CD4-positive, alpha-beta memory T cell (primary cell): ENCODE measurements at regions of chr13 and their contacts with region 1.

Region 1: DNA sequence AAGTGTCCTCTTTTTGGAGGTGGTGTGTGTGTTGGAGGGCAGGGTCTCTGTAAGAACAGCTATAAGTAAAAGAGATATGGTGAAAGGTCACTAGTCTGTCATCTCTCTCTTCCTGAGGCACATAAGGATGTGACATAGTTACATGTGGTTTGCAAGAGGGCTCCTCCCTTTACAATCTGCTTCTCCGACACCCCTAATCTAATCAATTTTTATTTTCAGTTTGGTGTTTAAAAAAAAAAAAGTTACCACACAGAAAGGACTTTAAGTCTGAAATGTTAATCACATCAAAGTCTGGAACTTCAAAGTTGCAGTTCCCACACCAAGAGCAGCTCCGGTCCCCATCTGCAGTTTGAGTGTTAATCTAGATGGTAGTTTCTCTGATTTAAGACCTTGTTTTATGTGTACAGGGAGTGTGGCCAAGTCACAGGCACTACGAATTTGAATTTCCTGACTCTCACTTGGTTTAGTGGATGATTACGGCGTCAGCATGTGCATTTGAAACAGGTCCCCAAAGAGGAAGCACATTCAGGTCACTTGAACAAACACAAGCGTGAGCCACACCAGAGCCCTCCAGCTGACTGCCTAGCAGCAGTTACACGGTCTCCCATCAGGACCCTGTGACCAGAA is 53.1 kb downstream of the FOXO1 start:
- DNase-seq: peak; percentile 78 to 85 (median 84)
- H3K4me3 ChIP-seq: peak overlapping the region in 1 of 2 donors; percentile 43
- H3K4me3 Mint-ChIP-seq: peak overlapping the region; percentile 81 to 94 (median 86)
- H3K27ac ChIP-seq: peak overlapping the region; percentile 68
- H3K27ac Mint-ChIP-seq: peak overlapping the region; percentile 89 to 99 (median 95)
- H3K4me1 ChIP-seq: peaks cover 96% of the 10 kb centered on the region
- H3K4me1 Mint-ChIP-seq: peaks cover 68 to 97% (median 88%) of the 10 kb centered on the region in 4 donors
- H3K27me3 ChIP-seq: no peaks in the 10 kb centered on the region
- H3K27me3 Mint-ChIP-seq: no peaks in the 10 kb centered on the region

Region 2: GRCh38 chr13:40494513-40494912 is 118.8 kb before region 1 on chr13:
- CTCF ChIA-PET with region 1: interaction called, 3 read pairs
- POLR2A ChIA-PET with region 1: interaction called, 10 read pairs
- intact Hi-C with region 1: no loop called
- DNase-seq: peak in 3 of 5 donors; percentile 37 to 54 (median 49)
- H3K4me3 ChIP-seq: peak overlapping the region in 1 of 2 donors; percentile 33
- H3K4me3 Mint-ChIP-seq: peak overlapping the region; percentile 71 to 92 (median 84)
- H3K27ac ChIP-seq: peak overlapping the region; percentile 38
- H3K27ac Mint-ChIP-seq: peak overlapping the region; percentile 90 to 98 (median 94)
- H3K4me1 ChIP-seq: peaks cover 74% of the 10 kb centered on the region
- H3K4me1 Mint-ChIP-seq: peaks cover 70 to 92% (median 80%) of the 10 kb centered on the region in 4 donors
- H3K27me3 ChIP-seq: no peaks in the 10 kb centered on the region
- H3K27me3 Mint-ChIP-seq: no peaks in the 10 kb centered on the region

Region 3: GRCh38 chr13:40629678-40630384 is 16.5 kb after region 1 on chr13:
- CTCF ChIA-PET with region 1: interaction called, 3 read pairs
- POLR2A ChIA-PET with region 1: interaction called, 6 read pairs
- intact Hi-C with region 1: loop called (anchors 2 kb)
- DNase-seq: no peak
- H3K4me3 ChIP-seq: no peak overlapping the region
- H3K4me3 Mint-ChIP-seq: peak overlapping the region in 5 of 8 donors; percentile 14 to 65 (median 49)
- H3K27ac ChIP-seq: no peak overlapping the region
- H3K27ac Mint-ChIP-seq: peak overlapping the region in 6 of 7 donors; percentile 60 to 77 (median 63)
- H3K4me1 ChIP-seq: peaks cover 90% of the 10 kb centered on the region
- H3K4me1 Mint-ChIP-seq: peaks cover 61 to 94% (median 81%) of the 10 kb centered on the region in 4 donors
- H3K27me3 ChIP-seq: no peaks in the 10 kb centered on the region
- H3K27me3 Mint-ChIP-seq: no peaks in the 10 kb centered on the region

Region 4: GRCh38 chr13:42392716-42393572 is 1779.6 kb after region 1 on chr13:
- CTCF ChIA-PET with region 1: no interaction called
- POLR2A ChIA-PET with region 1: no interaction called
- intact Hi-C with region 1: no loop called
- DNase-seq: peak; percentile 31 to 64 (median 48)
- H3K4me3 ChIP-seq: peak overlapping the region in 1 of 2 donors; percentile 3
- H3K4me3 Mint-ChIP-seq: peak overlapping the region; percentile 17 to 90 (median 68)
- H3K27ac ChIP-seq: peak overlapping the region; percentile 55
- H3K27ac Mint-ChIP-seq: peak overlapping the region; percentile 85 to 99 (median 94)
- H3K4me1 ChIP-seq: peaks cover 73% of the 10 kb centered on the region
- H3K4me1 Mint-ChIP-seq: peaks cover 68 to 88% (median 78%) of the 10 kb centered on the region in 4 donors
- H3K27me3 ChIP-seq: no peaks in the 10 kb centered on the region
- H3K27me3 Mint-ChIP-seq: no peaks in the 10 kb centered on the region